ENCODE measurements at regions of chr3 and their contacts with region 1.

Region 1: DNA sequence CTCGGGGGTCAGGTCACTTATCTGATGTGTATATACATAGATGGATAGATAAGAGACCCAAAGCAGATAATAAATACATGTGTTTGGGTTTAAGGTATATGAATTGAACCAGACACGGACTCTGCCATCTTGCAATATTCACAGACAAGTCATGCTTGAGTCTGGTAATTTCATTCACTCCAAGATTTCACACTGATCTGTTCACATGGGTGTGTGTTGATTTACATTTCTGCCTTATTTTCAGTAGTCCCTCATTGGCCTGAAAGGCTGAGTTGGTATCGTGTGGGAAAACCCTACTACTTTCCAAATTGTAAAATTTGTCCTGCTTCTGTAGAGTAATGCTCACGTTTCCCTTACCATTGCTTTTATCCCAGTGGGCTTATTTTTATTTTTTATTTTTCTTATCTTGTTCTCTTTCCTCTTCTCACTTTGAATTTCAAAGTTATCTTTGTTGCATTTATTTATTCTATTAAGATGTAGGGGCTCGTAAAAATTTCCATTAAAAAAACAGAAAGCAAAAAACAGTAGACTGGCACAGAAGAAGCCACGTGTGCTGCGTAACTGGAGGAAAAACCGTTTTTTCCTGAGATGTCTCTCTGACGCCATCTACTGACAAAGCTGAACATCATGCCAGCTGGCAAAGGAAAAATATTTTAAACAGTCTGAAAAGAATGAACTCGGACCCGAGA is 10.8 kb upstream of the MFSD1 start:
- DNase-seq: peak in 1 of 2 donors; percentile 89
- H3K4me3 ChIP-seq: peak overlapping the region; percentile 9 to 30 (median 18)
- H3K27ac ChIP-seq: no peak overlapping the region
- H3K4me1 ChIP-seq: peaks cover 0 to 12% (median 6%) of the 10 kb centered on the region in 4 donors
- H3K27me3 ChIP-seq: no peaks in the 10 kb centered on the region
- CTCF ChIP-seq: peak in 5 of 7 experiments; percentile 46 to 76 (median 67)
- EP300 ChIP-seq: no peak
- POLR2A ChIP-seq: no peak

Region 2: GRCh38 chr3:158672293-158673176 is 118.5 kb before region 1 on chr3 and contains the start of gene LXN:
- intact Hi-C with region 1: loop called (anchors 10 kb)
- DNase-seq: peak; percentile 90 to 95
- H3K4me3 ChIP-seq: peak within 1 kb of the TSS; percentile 51 to 58 (median 57)
- H3K27ac ChIP-seq: peak within 1 kb of the TSS; percentile 78 to 87 (median 84)
- H3K4me1 ChIP-seq: peaks cover 0 to 30% (median 13%) of the 10 kb centered on the region in 4 donors
- H3K27me3 ChIP-seq: no peaks in the 10 kb centered on the region
- CTCF ChIP-seq: peak in 5 of 7 experiments; percentile 43 to 64 (median 55)
- EP300 ChIP-seq: no peak
- POLR2A ChIP-seq: no peak
- total RNA-seq, gene LXN: 1.8 to 20.3 (median 8.7) TPM

Region 3: DNA sequence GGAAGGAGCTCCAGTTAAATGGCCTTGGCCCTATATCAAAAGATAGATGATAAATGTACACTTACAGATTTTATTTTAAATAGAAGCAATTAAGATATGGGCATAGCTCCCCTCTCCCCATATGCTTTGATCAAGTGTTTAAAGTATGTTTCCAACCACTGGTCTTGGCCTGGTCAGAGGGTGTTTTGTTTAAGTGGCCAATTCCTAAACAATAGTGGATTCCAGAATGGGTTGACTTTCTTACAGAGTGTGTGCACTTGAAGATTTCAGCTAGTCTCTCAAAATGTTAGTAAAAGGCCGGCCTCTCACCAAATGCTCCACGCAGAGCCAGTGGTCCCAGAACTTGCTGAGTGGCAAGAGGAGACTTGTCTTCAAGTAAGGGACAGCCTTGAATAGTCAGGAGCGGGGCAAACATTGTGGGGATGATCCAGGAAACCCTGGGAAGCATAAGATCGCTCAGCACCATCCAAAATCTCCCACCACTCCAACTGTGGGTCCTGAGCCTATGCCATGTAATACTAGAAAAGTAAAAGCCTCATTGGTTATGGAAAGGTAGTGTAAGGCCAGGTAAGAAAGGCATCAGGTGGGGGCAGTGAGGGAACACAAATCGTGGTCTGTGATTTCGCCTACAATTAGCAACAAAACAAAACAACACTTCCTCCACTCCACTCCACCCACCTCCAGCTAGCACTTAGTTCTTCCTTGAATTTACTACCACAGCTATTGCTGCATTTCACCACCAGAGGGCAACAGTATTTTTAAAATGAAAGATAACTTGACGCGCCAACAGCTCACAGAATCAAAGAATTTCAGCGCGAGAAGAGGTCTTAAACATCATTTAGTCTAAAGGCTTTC is 63.6 kb before region 1 on chr3:
- intact Hi-C with region 1: loop called (anchors 5 kb)
- DNase-seq: peak; percentile 45 to 89
- H3K4me3 ChIP-seq: peak overlapping the region in 1 of 4 donors; percentile 10
- H3K27ac ChIP-seq: peak overlapping the region in 4 of 5 donors; percentile 29 to 78 (median 57)
- H3K4me1 ChIP-seq: peaks cover 16 to 70% (median 34%) of the 10 kb centered on the region in 4 donors
- H3K27me3 ChIP-seq: no peaks in the 10 kb centered on the region
- CTCF ChIP-seq: peak in 5 of 7 experiments; percentile 72 to 90 (median 87)
- EP300 ChIP-seq: no peak
- POLR2A ChIP-seq: no peak

Region 4: DNA sequence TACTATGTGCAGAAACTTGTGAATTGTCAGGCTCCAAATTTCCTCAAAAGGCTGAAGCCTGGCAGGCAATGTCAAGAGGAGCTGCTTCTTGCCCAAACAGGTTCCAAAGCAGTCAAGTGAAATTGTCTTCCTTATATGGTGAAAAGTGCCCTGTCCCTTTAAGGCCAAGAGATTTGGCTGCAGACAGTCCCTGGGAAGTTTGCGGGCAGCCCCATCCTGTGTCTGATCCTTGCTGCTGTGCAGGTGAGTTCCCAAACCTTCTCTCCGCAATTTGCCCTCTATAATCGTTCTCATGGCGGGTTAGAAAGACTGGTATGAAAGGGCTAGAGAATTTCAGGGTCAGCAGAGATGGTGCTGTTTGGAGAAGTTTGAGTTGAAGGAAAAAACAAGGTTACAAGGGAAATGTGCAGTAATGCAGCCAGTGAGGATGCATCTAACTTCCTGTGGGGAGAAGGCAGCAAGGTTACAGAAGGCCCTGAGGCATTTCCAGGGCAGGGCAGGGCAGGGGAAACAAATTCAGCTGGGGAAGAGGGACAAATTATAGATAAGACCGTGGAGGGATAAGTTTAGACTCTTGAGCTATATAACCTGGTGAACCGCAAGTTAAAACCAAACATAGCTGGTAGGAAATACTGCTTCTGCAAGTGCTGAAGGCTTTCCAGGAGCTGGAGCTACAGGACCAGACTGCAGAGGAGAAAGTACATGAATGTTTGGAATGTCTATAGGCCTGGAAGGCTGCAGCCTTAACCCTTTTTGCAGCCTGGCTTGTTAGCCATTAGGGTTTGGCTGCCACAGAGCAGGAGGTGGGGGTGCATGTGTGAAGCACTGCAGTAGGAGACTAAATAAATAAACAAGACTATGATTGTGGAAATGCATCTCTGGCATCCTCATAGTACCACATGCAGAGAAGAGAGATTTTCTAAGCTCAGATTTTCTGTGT is 941.4 kb after region 1 on chr3:
- intact Hi-C with region 1: no loop called
- DNase-seq: peak in 1 of 2 donors; percentile 32
- H3K4me3 ChIP-seq: peak overlapping the region in 3 of 4 donors; percentile 12 to 21 (median 19)
- H3K27ac ChIP-seq: peak overlapping the region in 1 of 5 donors; percentile 69
- H3K4me1 ChIP-seq: peaks cover 0 to 16% (median 6%) of the 10 kb centered on the region in 4 donors
- H3K27me3 ChIP-seq: peaks cover 0 to 3% (median 0%) of the 10 kb centered on the region in 3 donors
- CTCF ChIP-seq: no peak
- EP300 ChIP-seq: no peak
- POLR2A ChIP-seq: no peak

Measured in stomach (tissue), 19 donors.